H1 (cell line): ENCODE measurements at regions of chr7 and their contacts with region 1.

Region 1: GRCh38 chr7:141975806-141976523 is 2.4 kb upstream of the TAS2R38 start:
- DNase-seq: peak; percentile 79 to 96
- H3K4me3 ChIP-seq: peak overlapping the region in 2 of 4 experiments; percentile 2 to 29; a peak in 2 of 8 replicates
- H3K27ac ChIP-seq: no peak overlapping the region
- H3K4me1 ChIP-seq: no peaks in the 10 kb centered on the region; a peak in 1 of 7 replicates
- H3K27me3 ChIP-seq: no peaks in the 10 kb centered on the region
- CTCF ChIP-seq: peak; percentile 84 to 94 (median 91)
- EP300 ChIP-seq: peak in 1 of 2 experiments; percentile 19; a peak in 1 of 3 replicates
- POLR2A ChIP-seq: no peak
- RAD21 ChIP-seq: peak; percentile 98 to 99

Region 2: DNA sequence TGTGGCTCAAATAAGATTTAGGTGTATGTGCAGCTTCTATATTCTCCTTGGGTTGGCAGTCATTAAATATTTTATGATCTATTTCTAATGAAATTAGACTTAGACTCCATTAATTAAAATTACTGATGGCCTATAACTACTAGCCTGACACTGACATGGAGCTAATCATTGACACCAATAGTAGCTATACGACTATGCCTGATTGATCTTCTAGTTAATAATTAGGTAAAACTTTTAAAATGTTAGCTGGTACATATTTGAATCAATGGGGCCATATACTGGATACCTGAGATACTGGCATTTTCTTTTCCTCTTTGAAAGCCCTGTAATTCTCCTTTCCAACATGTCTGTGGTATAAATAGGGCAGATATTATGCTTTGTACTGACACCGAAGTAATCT is 253.4 kb before region 1 on chr7:
- CTCF ChIA-PET with region 1: no interaction called
- POLR2A ChIA-PET with region 1: no interaction called
- DNase-seq: no peak
- H3K4me3 ChIP-seq: no peak overlapping the region
- H3K27ac ChIP-seq: no peak overlapping the region
- H3K4me1 ChIP-seq: no peaks in the 10 kb centered on the region
- H3K27me3 ChIP-seq: no peaks in the 10 kb centered on the region; a peak in 1 of 7 replicates
- CTCF ChIP-seq: no peak
- EP300 ChIP-seq: no peak
- POLR2A ChIP-seq: no peak
- RAD21 ChIP-seq: no peak

Region 3: GRCh38 chr7:141960687-141961422 is 15.1 kb before region 1 on chr7:
- CTCF ChIA-PET with region 1: interaction called, 27 read pairs
- POLR2A ChIA-PET with region 1: interaction called, 4 read pairs
- DNase-seq: no peak
- H3K4me3 ChIP-seq: no peak overlapping the region
- H3K27ac ChIP-seq: no peak overlapping the region
- H3K4me1 ChIP-seq: no peaks in the 10 kb centered on the region
- H3K27me3 ChIP-seq: no peaks in the 10 kb centered on the region
- CTCF ChIP-seq: no peak
- EP300 ChIP-seq: no peak
- POLR2A ChIP-seq: no peak
- RAD21 ChIP-seq: no peak

Region 4: GRCh38 chr7:142001163-142001874 is 25.4 kb after region 1 on chr7:
- CTCF ChIA-PET with region 1: interaction called, 72 read pairs
- POLR2A ChIA-PET with region 1: no interaction called
- DNase-seq: no peak
- H3K4me3 ChIP-seq: no peak overlapping the region
- H3K27ac ChIP-seq: no peak overlapping the region
- H3K4me1 ChIP-seq: no peaks in the 10 kb centered on the region
- H3K27me3 ChIP-seq: no peaks in the 10 kb centered on the region
- CTCF ChIP-seq: no peak
- EP300 ChIP-seq: no peak
- POLR2A ChIP-seq: no peak
- RAD21 ChIP-seq: no peak

Region 5: GRCh38 chr7:142024547-142024946 is 48.6 kb after region 1 on chr7:
- CTCF ChIA-PET with region 1: interaction called, 60 read pairs
- POLR2A ChIA-PET with region 1: no interaction called
- DNase-seq: no peak
- H3K4me3 ChIP-seq: no peak overlapping the region
- H3K27ac ChIP-seq: no peak overlapping the region
- H3K4me1 ChIP-seq: no peaks in the 10 kb centered on the region
- H3K27me3 ChIP-seq: no peaks in the 10 kb centered on the region
- CTCF ChIP-seq: no peak
- EP300 ChIP-seq: no peak
- POLR2A ChIP-seq: no peak
- RAD21 ChIP-seq: no peak

Region 6: GRCh38 chr7:142039231-142039630 is 63.3 kb after region 1 on chr7:
- CTCF ChIA-PET with region 1: interaction called, 18 read pairs
- POLR2A ChIA-PET with region 1: interaction called, 4 read pairs
- DNase-seq: no peak
- H3K4me3 ChIP-seq: no peak overlapping the region
- H3K27ac ChIP-seq: no peak overlapping the region
- H3K4me1 ChIP-seq: no peaks in the 10 kb centered on the region
- H3K27me3 ChIP-seq: no peaks in the 10 kb centered on the region
- CTCF ChIP-seq: no peak
- EP300 ChIP-seq: no peak
- POLR2A ChIP-seq: no peak
- RAD21 ChIP-seq: no peak

Region 7: GRCh38 chr7:142181966-142182365 is 206.0 kb after region 1 on chr7:
- CTCF ChIA-PET with region 1: interaction called, 30 read pairs
- POLR2A ChIA-PET with region 1: interaction called, 3 read pairs
- DNase-seq: no peak
- H3K4me3 ChIP-seq: no peak overlapping the region
- H3K27ac ChIP-seq: no peak overlapping the region
- H3K4me1 ChIP-seq: no peaks in the 10 kb centered on the region; a peak in 1 of 7 replicates
- H3K27me3 ChIP-seq: no peaks in the 10 kb centered on the region
- CTCF ChIP-seq: no peak
- EP300 ChIP-seq: peak in 1 of 2 experiments; percentile 49; a peak in 1 of 3 replicates
- POLR2A ChIP-seq: no peak
- RAD21 ChIP-seq: no peak

Region 8: GRCh38 chr7:142196066-142196840 is 220.3 kb after region 1 on chr7:
- CTCF ChIA-PET with region 1: interaction called, 49 read pairs
- POLR2A ChIA-PET with region 1: no interaction called
- DNase-seq: no peak
- H3K4me3 ChIP-seq: no peak overlapping the region
- H3K27ac ChIP-seq: no peak overlapping the region
- H3K4me1 ChIP-seq: no peaks in the 10 kb centered on the region
- H3K27me3 ChIP-seq: no peaks in the 10 kb centered on the region; a peak in 1 of 7 replicates
- CTCF ChIP-seq: no peak
- EP300 ChIP-seq: no peak
- POLR2A ChIP-seq: no peak
- RAD21 ChIP-seq: no peak